AG04450 (cell line): ENCODE measurements at regions of chr20 and their contacts with region 1.

Region 1: GRCh38 chr20:20568604-20569205 is 143.7 kb downstream of the RALGAPA2 start:
- DNase-seq: no peak
- H3K4me3 ChIP-seq: no peak overlapping the region
- H3K27ac ChIP-seq: no peak overlapping the region
- H3K27me3 ChIP-seq: no peaks in the 10 kb centered on the region
- CTCF ChIP-seq: peak; percentile 85

Region 2: DNA sequence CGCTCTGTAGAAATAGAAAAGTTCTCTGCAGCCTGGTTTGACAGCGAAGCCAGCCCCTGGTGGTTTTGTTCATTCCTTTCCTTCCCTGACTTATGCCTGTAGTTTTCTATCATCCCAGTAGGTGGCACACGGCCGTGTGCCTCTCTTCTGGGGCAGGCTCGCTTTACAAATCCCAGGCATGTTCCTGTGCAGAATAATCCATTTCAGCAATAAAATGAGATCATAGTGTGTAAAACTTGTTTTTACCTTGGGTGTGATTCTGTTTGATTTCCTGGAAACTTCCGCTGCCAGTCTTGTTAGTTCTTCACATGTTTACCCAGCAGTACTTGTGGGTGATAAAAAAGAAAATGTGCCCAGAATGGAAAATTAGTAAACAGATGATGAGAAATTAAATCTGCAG is 208.2 kb before region 1 on chr20:
- CTCF ChIA-PET with region 1: interaction called, 14 read pairs
- POLR2A ChIA-PET with region 1: no interaction called
- DNase-seq: peak; percentile 43
- H3K4me3 ChIP-seq: no peak overlapping the region
- H3K27ac ChIP-seq: no peak overlapping the region
- H3K27me3 ChIP-seq: peaks cover 46% of the 10 kb centered on the region
- CTCF ChIP-seq: peak; percentile 93

Region 3: DNA sequence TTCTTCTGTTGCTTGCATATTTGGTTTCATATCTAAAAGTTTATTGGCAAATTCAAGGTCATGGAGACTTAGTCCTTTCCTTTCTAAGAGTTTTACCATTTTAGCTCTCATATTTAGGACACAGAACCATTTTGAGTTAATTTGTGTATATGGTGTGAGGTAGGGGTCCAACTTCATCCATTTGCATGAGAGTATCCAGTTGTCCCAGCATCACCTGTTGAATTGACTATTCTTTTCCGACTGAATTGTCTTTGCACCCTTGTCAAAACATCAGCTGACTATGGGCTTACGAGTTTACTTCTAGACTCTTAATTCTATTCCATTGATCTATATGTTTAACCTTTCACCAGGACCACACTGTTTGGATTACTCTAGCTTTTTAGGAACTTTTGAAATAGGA is 13.8 kb before region 1 on chr20:
- CTCF ChIA-PET with region 1: no interaction called
- POLR2A ChIA-PET with region 1: no interaction called
- DNase-seq: no peak
- H3K4me3 ChIP-seq: no peak overlapping the region
- H3K27ac ChIP-seq: no peak overlapping the region
- H3K27me3 ChIP-seq: no peaks in the 10 kb centered on the region
- CTCF ChIP-seq: no peak